ENCODE measurements at regions of chr17 and their contacts with region 1.

Region 1: DNA sequence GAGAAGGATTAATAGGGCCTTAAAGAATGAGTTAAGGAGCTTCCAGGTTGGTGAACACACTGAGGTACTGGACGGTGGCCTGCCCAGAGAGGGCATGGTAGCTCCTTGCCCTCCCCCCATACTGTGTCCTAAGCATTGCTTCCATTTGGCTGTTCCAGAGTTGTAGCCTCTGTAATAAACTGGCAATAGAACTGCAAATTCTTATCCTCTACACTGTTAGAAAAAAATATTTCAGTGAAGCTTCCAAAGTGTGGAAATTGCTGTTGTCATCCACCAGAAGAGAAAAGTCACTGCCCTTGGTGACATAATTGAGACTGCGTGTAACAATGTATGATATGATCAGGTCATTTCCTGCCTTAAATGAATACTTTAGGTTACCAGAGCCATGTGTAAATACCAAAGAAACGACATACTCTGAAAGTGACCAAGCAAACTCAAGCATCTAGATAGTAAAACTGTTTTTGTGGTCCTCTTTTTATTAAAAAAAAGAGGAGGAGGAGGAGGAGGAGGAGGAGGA is 65.9 kb downstream of the CEP95 start:
- DNase-seq: peak; percentile 70
- ATAC-seq: peak; percentile 78
- H3K4me3 ChIP-seq: no peak overlapping the region
- H3K27ac ChIP-seq: peak overlapping the region; percentile 49
- H3K4me1 ChIP-seq: peaks cover 21% of the 10 kb centered on the region
- H3K27me3 ChIP-seq: no peaks in the 10 kb centered on the region
- CTCF ChIP-seq: no peak

Region 2: DNA sequence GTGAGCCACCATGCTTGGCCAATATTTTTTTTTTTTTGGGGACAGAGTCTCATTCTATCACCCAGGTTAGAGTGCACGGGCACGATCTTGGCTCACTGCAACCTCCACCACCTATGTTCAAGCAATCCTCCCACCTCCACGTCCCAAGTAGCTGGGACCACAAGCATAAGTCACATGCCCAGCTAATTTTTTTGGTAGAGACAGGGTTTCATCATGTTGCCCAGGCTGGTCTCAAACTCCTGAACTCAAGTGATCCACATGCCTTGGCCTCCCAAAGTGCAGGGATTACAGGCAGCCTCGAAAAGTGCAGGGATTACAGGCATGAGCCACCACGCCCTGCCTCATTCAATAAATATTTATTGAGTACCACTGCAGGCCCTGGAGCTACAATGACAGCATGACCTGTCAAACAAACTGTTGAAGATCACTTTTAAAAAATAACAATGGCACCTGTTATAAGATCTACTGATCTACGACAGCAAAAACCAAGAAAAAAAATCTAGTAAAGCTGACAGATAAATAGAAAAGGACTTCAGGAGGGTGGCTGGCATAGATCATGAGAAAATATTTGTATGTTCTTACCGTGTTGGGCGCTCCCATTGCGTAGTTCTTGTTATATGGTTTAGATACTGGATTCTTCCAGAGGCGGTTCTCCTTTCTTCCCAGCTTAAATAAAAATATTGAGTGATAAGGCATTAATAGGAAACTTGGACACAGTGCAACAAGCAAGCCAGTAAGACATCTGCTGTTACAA is 10.4 kb after region 1 on chr17:
- CTCF ChIA-PET with region 1: no interaction called
- POLR2A ChIA-PET with region 1: no interaction called
- intact Hi-C with region 1: no loop called
- DNase-seq: peak; percentile 76
- ATAC-seq: peak; percentile 68
- H3K4me3 ChIP-seq: no peak overlapping the region
- H3K27ac ChIP-seq: peak overlapping the region; percentile 19; the same call in 1 of the 2 replicates
- H3K4me1 ChIP-seq: peaks cover 22% of the 10 kb centered on the region
- H3K27me3 ChIP-seq: no peaks in the 10 kb centered on the region
- CTCF ChIP-seq: no peak

Region 3: DNA sequence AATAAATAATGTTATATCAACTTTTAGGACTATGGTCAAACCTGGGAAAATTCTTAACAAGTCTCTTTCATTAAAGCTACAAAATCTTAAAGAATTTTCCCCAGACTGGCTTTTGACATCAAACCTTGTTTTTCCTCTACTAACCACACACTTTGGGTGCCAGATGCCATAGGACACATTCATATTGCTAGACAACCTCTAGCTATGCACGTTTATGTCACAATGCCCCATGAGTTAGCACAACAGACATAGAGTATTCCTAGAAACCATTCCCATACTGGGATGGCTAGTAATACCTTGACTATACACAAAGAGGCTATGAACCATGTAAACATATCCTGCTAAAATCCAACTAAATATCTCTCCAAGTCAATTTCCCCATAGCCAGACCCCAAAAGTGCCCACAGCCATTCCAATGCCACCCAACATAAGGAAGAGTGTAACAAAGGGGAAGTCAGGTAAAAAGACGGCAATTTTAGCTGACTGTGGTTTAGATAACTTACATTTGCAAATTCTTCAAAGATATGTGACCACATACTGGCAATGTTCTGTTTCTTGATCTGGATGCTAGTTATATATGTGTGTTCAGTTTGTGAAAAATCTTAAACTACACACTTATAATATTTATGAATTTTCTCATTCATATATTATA is 66.0 kb after region 1 on chr17:
- CTCF ChIA-PET with region 1: no interaction called
- POLR2A ChIA-PET with region 1: interaction called, 13 read pairs
- intact Hi-C with region 1: no loop called
- DNase-seq: no peak
- ATAC-seq: no peak
- H3K4me3 ChIP-seq: no peak overlapping the region
- H3K27ac ChIP-seq: no peak overlapping the region
- H3K4me1 ChIP-seq: peaks cover 24% of the 10 kb centered on the region
- H3K27me3 ChIP-seq: no peaks in the 10 kb centered on the region
- CTCF ChIP-seq: no peak